Thyroid gland (tissue), 4 donors: ENCODE measurements at regions of chr4 and their contacts with region 1.

Region 1: GRCh38 chr4:151099229-151099975 is at the start of gene RPS3A:
- DNase-seq: peak; percentile 96 to 97
- H3K4me3 ChIP-seq: peak within 1 kb of the TSS; percentile 21 to 76 (median 65)
- H3K27ac ChIP-seq: peak within 1 kb of the TSS; percentile 88 to 97 (median 89)
- H3K4me1 ChIP-seq: peaks cover 26 to 34% of the 10 kb centered on the region in 2 donors
- H3K27me3 ChIP-seq: no peaks in the 10 kb centered on the region
- CTCF ChIP-seq: peak; percentile 18 to 97 (median 76)
- POLR2A ChIP-seq: peak in 1 of 2 donors; percentile 92
- total RNA-seq, gene RPS3A: 2,907 to 6,038 (median 3,041) TPM

Region 2: DNA sequence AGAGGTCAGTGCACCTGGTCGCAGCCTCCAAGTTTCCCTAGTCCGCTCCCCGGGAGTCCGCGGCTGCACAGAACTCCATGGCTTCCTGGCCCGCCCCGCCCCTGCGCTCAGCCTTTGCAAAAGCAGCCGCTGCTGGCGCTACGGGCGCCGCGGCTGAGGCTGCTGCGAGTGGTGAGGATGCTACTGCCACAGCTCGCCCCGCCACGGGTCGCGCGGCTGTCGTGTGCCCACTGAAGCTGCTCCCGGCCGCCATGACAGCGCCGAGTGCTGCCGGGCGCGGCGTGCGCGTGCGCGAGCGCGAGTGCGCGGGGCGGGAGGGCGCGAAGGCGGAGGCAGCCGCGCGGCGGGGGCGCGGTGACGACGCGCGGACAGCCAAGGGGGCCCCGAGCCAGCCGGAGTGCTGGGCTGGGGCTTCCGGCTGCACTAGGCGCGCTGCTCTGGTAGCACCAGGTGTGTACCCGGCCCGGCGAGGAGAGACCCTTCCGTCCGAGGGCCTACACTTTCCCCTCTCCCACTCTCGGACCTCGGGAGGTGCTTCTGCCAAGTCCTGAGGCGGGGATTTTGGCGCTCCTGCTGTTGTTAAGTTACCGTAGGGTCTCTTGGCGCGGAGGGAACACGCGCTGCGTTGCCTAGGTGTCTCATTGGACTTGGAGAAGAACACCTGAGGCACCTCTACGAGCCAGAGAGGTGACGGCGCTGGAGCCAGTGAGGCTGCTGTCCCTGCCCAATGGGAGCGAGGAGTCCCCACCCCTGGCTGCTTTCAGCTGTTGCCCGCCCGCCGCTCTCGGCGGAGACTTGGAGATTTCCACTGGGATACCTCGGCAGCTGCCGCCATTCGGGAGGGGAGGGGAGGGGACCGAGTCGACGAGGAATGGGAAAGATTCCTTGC is 83.7 kb before region 1 on chr4:
- intact Hi-C with region 1: loop called (anchors 10 kb)
- DNase-seq: peak; percentile 90 to 92
- H3K4me3 ChIP-seq: peak overlapping the region; percentile 64 to 95 (median 80)
- H3K27ac ChIP-seq: peak overlapping the region; percentile 67 to 99 (median 96)
- H3K4me1 ChIP-seq: peaks cover 4 to 8% of the 10 kb centered on the region in 2 donors
- H3K27me3 ChIP-seq: no peaks in the 10 kb centered on the region
- CTCF ChIP-seq: no peak
- POLR2A ChIP-seq: peak; percentile 45 to 90

Region 3: GRCh38 chr4:151315212-151315886 is 215.9 kb after region 1 on chr4:
- intact Hi-C with region 1: no loop called
- DNase-seq: peak in 1 of 2 donors; percentile 23
- H3K4me3 ChIP-seq: no peak overlapping the region
- H3K27ac ChIP-seq: peak overlapping the region; percentile 69 to 84 (median 76)
- H3K4me1 ChIP-seq: peaks cover 18 to 36% of the 10 kb centered on the region in 2 donors
- H3K27me3 ChIP-seq: no peaks in the 10 kb centered on the region
- CTCF ChIP-seq: no peak
- POLR2A ChIP-seq: no peak

Region 4: DNA sequence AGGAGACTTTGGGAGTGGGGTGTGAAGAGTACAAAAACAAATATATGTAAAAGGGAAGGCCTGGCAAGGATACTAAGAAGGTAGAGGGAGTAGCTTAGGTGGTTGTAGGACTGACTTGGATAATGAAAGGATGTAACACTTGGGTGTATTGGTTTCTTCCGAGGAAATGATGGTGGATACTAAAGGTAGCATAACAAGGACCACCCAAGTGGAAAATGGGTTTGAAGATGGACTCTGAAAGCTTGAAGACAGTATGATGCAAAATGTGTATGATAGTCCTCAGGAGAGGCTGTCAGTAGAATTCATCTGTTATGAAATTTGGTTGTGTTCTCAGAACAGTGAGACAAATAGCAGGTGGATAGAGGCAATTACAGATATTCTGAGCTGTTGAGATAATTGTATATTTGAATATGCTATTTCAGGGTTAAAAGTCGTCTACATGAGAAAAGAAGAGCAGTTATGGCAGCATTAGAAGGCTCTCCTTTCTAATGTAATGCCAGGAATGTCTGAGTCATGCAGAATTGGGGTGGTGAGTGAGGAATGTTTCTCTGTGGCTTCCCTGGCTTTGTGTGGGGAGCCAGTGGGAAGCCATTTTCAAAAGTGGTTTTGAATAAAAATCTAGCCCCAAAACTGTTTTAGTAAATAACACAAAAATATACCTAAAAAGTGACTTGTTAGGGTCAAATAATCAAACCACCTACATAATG is 385.1 kb after region 1 on chr4:
- intact Hi-C with region 1: no loop called
- DNase-seq: no peak
- H3K4me3 ChIP-seq: no peak overlapping the region
- H3K27ac ChIP-seq: no peak overlapping the region
- H3K4me1 ChIP-seq: peaks cover 3 to 6% of the 10 kb centered on the region in 2 donors
- H3K27me3 ChIP-seq: no peaks in the 10 kb centered on the region
- CTCF ChIP-seq: no peak
- POLR2A ChIP-seq: no peak